ENCODE measurements at regions of chr6 and their contacts with region 1.

Region 1: GRCh38 chr6:13336553-13336952 is 8.2 kb upstream of the TBC1D7 start:
- DNase-seq: peak; percentile 86 to 87
- H3K4me3 ChIP-seq: no peak overlapping the region
- H3K27ac ChIP-seq: no peak overlapping the region
- H3K4me1 ChIP-seq: no peaks in the 10 kb centered on the region
- H3K27me3 ChIP-seq: no peaks in the 10 kb centered on the region
- CTCF ChIP-seq: peak; percentile 89 to 94

Region 2: DNA sequence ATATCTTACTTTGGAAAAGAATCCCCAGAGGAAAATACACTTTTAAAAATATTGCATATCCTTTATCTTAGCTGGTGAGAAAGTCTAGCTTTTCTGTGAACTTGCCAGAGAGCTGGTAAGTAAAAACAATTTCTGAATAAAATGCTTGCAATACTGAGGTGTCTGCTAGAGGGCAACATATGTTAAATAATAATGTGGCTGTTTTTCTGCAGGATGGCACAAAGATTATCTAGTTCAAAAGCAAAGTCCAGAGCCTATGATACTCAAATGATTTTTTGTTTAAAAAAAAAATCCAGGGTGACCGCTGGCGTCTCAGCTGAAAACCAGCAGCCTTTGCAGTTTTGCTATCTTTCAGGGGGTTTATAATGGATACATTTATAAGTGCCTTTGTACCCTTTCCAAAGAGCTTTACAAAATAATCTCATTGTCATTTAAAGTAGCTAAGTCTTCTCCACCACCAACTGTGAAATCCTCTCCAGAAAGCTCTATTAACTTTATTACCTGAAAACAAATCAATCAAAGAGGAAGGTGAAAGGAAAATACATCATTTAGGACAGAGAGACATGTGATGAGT is 425.1 kb before region 1 on chr6:
- intact Hi-C with region 1: loop called (anchors 2 kb)
- DNase-seq: no peak
- H3K4me3 ChIP-seq: no peak overlapping the region
- H3K27ac ChIP-seq: no peak overlapping the region
- H3K4me1 ChIP-seq: peaks cover 0 to 8% (median 0%) of the 10 kb centered on the region in 4 donors
- H3K27me3 ChIP-seq: no peaks in the 10 kb centered on the region
- CTCF ChIP-seq: peak; percentile 58 to 80

Region 3: GRCh38 chr6:13375360-13375878 is 38.9 kb after region 1 on chr6:
- intact Hi-C with region 1: no loop called
- DNase-seq: no peak
- H3K4me3 ChIP-seq: no peak overlapping the region
- H3K27ac ChIP-seq: no peak overlapping the region
- H3K4me1 ChIP-seq: peaks cover 0 to 44% (median 30%) of the 10 kb centered on the region in 4 donors
- H3K27me3 ChIP-seq: no peaks in the 10 kb centered on the region
- CTCF ChIP-seq: no peak

Region 4: DNA sequence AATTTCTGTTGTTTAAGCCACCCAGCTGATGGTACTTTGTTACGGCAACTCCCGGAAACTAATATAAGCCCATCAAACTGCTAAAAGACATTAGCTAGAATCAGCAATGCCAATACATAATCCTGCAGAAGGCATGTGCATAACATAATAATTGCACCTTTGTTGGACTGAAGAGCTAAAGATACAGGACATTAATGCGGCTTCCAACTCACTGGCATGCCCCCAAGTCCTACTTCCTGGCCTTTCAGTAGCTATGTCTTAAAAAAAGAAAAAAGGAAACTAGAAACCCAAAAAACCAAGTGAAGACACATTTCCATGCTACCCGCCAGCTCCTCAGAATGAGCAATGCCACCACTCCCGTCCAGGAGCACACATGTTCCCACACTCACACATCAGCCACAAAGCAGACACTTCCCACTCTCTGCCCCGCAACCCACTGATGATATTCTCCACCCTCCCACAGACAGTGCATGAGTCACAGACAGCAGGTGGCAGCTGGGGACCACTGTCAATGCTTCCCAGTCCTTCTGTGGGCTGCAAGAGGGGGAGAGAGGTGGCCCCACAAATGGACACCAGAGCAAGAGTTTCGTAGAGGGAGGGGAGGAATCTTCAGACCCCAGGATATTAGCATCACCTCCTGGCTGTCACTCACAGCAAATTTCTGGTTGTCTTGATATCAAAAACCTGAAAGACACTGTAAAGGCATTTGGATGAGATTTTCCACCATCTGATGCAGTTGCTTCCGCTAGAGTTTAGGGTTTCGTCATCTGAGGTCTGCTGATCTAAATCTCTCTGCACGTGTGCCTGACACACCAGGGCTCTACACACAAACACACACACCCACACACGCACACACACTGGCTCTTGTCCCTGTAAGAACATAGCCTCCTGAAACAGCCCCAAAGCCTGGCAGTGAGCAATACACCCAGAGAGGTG is 118.0 kb after region 1 on chr6:
- intact Hi-C with region 1: no loop called
- DNase-seq: peak in 1 of 2 donors; percentile 62
- H3K4me3 ChIP-seq: no peak overlapping the region
- H3K27ac ChIP-seq: peak overlapping the region; percentile 11 to 49
- H3K4me1 ChIP-seq: peaks cover 0 to 83% (median 38%) of the 10 kb centered on the region in 4 donors
- H3K27me3 ChIP-seq: no peaks in the 10 kb centered on the region
- CTCF ChIP-seq: peak in 1 of 2 experiments; percentile 4

Region 5: GRCh38 chr6:13487122-13488014 is 150.8 kb after region 1 on chr6 and contains the start of gene GFOD1:
- intact Hi-C with region 1: loop called (anchors 10 kb)
- DNase-seq: peak; percentile 86 to 94
- H3K4me3 ChIP-seq: peak within 1 kb of the TSS; percentile 91 to 94
- H3K27ac ChIP-seq: peak within 1 kb of the TSS; percentile 86 to 90
- H3K4me1 ChIP-seq: peaks cover 0 to 35% (median 8%) of the 10 kb centered on the region in 4 donors
- H3K27me3 ChIP-seq: no peaks in the 10 kb centered on the region
- CTCF ChIP-seq: no peak

Region 6: DNA sequence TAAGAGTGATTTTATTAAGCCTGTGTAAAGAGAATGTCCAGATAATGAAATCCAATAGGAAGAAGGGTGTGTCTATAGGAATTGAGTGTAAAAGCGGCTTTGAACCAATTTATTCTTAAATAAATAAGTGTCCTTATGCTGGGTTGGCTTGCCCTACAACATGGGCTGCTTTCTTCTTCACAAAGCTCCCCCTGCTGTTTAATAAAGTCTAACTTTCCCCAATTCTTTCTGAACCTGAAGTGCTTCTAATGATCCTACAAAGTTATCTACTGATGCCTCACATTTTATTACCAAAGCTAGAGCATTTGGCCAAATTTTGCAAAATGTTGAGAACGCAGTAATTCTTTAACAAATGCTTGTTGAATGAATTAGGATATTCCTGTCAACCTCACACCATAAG is 201.5 kb after region 1 on chr6:
- intact Hi-C with region 1: loop called (anchors 2 kb)
- DNase-seq: no peak
- H3K4me3 ChIP-seq: no peak overlapping the region
- H3K27ac ChIP-seq: no peak overlapping the region
- H3K4me1 ChIP-seq: no peaks in the 10 kb centered on the region
- H3K27me3 ChIP-seq: no peaks in the 10 kb centered on the region
- CTCF ChIP-seq: peak; percentile 49 to 74

Region 7: DNA sequence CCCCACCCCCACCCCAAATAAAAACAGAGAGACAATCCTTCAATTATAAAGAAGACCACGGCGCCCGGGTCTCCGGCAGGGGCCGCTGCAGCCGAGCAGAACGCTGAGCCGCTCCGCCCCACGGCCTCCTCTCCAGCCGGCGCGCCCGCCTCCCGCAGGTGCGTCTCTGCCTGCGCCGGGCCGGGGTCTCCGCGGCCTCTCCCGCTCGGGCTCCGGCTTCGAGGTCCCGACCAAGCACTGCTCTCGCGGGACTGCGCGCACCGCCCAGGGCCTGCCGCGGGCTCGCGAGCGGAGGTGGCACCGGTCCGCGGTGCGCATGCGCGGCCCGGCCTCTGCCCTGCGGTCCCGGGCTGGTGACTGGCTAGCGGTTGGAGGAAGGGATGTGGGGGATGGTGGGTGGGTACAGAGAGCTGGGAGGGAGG is 237.6 kb after region 1 on chr6:
- intact Hi-C with region 1: loop called (anchors 10 kb)
- DNase-seq: peak; percentile 91 to 96
- H3K4me3 ChIP-seq: peak overlapping the region; percentile 76 to 91
- H3K27ac ChIP-seq: peak overlapping the region; percentile 95 to 96
- H3K4me1 ChIP-seq: peaks cover 0 to 9% (median 6%) of the 10 kb centered on the region in 4 donors
- H3K27me3 ChIP-seq: peaks cover 0 to 1% of the 10 kb centered on the region in 2 donors
- CTCF ChIP-seq: peak; percentile 41 to 51

Measured in tibial artery (tissue), 4 donors.